Activated T-helper 1 cell treated with anti-CD3 and anti-CD28 coated beads, Interleukin-12 subunit alpha, Interleukin-12 subunit beta, Interleukin-2, Interleukin-4 antibody, amounts not matched to agents 30 ng/mL and 10 ng/mL and 1 ng/mL, durations not matched to agents 14 hours and 24 hours and 36 hours (primary cell): ENCODE measurements at regions of chr7 and their contacts with region 1.

Region 1: GRCh38 chr7:93036807-93037206 is 81.0 kb downstream of the SAMD9 start:
- DNase-seq: peak; percentile 53
- H3K4me3 Mint-ChIP-seq: no peak overlapping the region
- H3K27ac Mint-ChIP-seq: peak overlapping the region; percentile 85
- H3K4me1 Mint-ChIP-seq: peaks cover 50% of the 10 kb centered on the region
- H3K27me3 Mint-ChIP-seq: no peaks in the 10 kb centered on the region

Region 2: DNA sequence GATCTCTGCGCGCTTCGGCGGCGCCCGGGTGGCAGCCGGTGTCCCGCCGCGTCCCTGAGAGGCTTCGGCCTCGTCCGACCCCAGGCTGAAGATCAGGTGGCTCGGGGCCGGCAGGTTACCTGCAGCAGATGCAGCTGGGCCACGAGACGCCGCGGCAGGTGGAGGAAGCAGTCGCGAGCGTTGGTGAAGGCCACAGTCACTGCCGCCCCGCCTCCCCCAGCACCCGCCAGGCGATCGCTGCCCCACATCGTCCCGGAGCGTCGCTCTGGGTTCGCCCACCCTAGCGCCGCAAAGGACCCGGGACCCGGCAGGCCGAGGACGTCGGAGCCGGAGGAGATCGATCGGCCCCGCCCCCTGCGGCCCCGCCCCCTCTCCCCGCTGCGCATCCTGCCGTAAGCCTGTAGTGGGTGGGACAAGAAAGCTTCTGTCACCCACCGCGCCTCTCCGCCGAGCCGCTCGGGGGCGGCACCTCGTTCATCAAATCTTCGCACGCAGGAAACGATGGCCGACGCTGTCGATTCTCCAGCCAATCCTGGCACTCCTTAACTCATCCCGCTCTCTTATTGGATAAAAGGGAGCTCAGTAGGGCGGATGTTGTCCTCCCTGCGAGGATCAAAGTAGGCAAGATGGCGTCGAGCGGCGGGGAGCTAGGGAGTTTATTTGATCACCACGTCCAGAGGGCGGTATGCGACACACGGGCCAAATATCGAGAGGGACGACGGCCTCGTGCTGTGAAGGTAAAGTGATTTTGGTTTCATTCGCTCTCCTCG is 508.4 kb before region 1 on chr7 and contains the starts of genes PEX1 and RBM48:
- intact Hi-C with region 1: loop called (anchors 2 kb)
- DNase-seq: peak; percentile 94
- H3K4me3 Mint-ChIP-seq: peak within 1 kb of the TSS; percentile 91
- H3K27ac Mint-ChIP-seq: peak within 1 kb of the TSS; percentile 94
- H3K4me1 Mint-ChIP-seq: peaks cover 24% of the 10 kb centered on the region
- H3K27me3 Mint-ChIP-seq: no peaks in the 10 kb centered on the region
- total RNA-seq, gene PEX1: 14.7 and 17.0 TPM in 2 replicates
- total RNA-seq, gene RBM48: 17.2 and 17.6 TPM in 2 replicates

Region 3: GRCh38 chr7:92708111-92709042 is 328.4 kb before region 1 on chr7:
- intact Hi-C with region 1: loop called (anchors 1 kb)
- DNase-seq: no peak
- H3K4me3 Mint-ChIP-seq: no peak overlapping the region
- H3K27ac Mint-ChIP-seq: peak overlapping the region; percentile 84
- H3K4me1 Mint-ChIP-seq: peaks cover 59% of the 10 kb centered on the region
- H3K27me3 Mint-ChIP-seq: no peaks in the 10 kb centered on the region

Region 4: GRCh38 chr7:92889081-92889480 is 147.7 kb before region 1 on chr7:
- intact Hi-C with region 1: no loop called
- DNase-seq: no peak
- H3K4me3 Mint-ChIP-seq: no peak overlapping the region
- H3K27ac Mint-ChIP-seq: no peak overlapping the region
- H3K4me1 Mint-ChIP-seq: peaks cover 7% of the 10 kb centered on the region
- H3K27me3 Mint-ChIP-seq: peaks cover 2% of the 10 kb centered on the region

Region 5: DNA sequence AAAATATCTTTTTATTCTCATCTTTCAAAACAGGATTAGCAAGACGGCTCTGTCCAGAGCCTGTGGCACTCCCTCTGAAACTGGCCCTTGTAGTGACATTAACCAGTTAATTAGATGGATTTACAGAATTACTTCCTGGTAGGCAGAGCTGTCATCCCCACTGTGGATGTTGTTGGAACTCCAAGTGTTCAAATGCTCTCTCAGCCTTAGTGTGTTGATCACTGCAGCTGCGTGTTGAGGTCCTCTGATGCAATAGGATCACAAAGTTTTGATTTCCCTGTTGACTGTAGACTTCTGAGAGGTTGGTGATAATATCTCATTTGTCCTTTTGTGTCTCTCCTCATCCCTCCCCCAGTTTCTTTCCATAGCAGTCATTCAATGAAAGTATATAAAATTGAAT is 83.2 kb before region 1 on chr7:
- intact Hi-C with region 1: loop called (anchors 1 kb)
- DNase-seq: no peak
- H3K4me3 Mint-ChIP-seq: no peak overlapping the region
- H3K27ac Mint-ChIP-seq: peak overlapping the region; percentile 40
- H3K4me1 Mint-ChIP-seq: peaks cover 34% of the 10 kb centered on the region
- H3K27me3 Mint-ChIP-seq: peaks cover 1% of the 10 kb centered on the region

Region 6: DNA sequence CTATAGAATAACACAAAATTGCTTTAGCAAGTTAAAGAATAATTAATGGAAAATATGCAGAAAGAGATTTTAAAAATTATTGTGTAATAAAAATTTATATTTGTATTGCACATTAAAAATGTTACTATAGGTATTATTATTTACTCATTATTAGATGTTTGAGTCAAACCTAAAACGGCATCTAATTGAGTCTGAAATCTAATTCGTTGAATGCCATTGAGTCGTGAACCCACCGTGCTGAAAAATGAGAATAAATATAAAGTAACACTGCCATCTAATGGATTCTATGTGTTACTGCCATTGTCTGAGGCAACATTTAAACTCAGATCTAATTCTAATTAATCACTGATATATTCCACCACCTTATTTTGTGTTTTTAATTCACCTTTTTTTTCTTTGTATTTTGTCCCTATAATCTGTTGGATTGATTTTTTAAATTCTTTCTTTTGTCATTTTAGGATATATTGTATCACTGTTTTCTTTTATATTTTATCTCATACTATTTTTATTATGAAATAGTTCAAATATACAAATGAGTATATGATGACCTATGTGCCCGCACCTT is 18.8 kb after region 1 on chr7:
- intact Hi-C with region 1: loop called (anchors 1 kb)
- DNase-seq: no peak
- H3K4me3 Mint-ChIP-seq: no peak overlapping the region
- H3K27ac Mint-ChIP-seq: no peak overlapping the region
- H3K4me1 Mint-ChIP-seq: peaks cover 19% of the 10 kb centered on the region
- H3K27me3 Mint-ChIP-seq: peaks cover 6% of the 10 kb centered on the region